ENCODE measurements at regions of chr15 and their contacts with region 1.

Region 1: GRCh38 chr15:63763476-63764123 is 70.1 kb downstream of the HERC1 start:
- DNase-seq: no peak
- H3K4me3 ChIP-seq: no peak overlapping the region
- H3K27ac ChIP-seq: no peak overlapping the region
- H3K4me1 ChIP-seq: peaks cover 6% of the 10 kb centered on the region
- H3K27me3 ChIP-seq: no peaks in the 10 kb centered on the region
- CTCF ChIP-seq: no peak
- EP300 ChIP-seq: no peak
- POLR2A ChIP-seq: no peak

Region 2: DNA sequence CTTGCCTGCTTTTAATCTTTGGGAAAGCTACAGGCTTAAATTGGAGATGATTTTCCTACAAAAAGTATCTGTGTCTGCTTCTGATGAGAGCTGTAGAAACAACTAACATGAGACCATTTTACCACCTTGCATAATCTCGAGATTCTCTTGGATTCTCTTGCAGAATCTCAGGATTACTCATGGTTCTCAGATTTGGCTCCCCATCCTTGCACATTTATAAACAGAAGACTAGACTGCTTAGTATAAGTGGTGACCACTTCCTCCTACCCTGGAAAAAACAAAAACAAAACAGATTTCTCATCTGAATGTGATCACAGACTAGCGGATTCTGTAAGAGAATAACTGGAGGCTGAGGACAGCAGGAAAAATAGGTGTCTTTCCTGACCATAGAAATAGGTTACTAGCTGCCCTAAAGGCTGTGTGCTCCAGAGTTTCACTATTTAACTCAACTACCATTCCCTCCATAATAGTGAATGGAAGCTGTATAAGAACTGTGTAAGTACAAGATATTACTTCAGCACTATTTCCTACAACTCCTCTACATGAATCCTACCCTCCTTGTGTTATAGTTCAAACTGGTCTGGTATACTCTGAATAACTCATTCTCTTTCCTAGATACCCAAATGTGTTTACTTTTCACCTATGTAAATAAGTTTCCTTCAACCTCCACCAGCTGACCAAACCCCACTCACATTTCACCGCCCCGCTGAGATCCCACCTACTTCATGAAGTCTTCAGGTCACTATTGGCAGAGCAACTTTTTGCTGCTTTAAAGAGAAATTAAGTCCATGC is 1476.3 kb before region 1 on chr15:
- intact Hi-C with region 1: no loop called
- DNase-seq: no peak
- H3K4me3 ChIP-seq: no peak overlapping the region
- H3K27ac ChIP-seq: no peak overlapping the region
- H3K4me1 ChIP-seq: no peaks in the 10 kb centered on the region
- H3K27me3 ChIP-seq: no peaks in the 10 kb centered on the region
- CTCF ChIP-seq: no peak
- EP300 ChIP-seq: no peak
- POLR2A ChIP-seq: no peak

Region 3: DNA sequence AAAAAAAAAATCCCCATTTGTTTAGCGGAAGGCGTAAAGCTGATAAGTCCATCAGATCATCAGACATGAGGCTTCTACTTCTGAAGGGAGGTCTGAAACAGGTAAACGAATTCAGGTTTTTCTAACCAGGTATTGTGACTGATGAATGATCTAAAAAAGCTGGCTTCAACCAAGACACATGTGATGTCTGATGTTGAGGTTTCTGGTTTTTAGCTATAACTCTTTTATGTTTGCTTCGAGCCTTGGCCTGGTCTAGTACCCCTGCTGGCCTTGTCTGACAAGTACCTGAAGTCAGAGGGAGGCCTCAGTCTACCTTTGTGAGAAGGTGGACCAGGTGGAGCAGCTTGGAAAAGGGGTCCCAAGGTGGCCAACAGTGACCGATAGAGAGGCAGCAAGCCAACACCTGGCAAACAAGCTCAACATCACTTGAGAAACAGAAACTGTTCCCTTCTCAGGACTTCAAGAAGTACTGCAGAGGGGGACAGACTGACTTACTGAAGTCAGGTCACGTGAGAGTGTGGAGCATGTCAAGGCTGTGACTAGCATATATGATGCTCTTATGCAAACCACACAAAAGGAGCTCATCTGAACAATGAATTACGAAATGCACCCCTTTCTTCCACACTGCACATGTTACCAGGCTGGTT is 349.0 kb before region 1 on chr15:
- intact Hi-C with region 1: no loop called
- DNase-seq: no peak
- H3K4me3 ChIP-seq: no peak overlapping the region
- H3K27ac ChIP-seq: no peak overlapping the region
- H3K4me1 ChIP-seq: no peaks in the 10 kb centered on the region
- H3K27me3 ChIP-seq: no peaks in the 10 kb centered on the region
- CTCF ChIP-seq: no peak
- EP300 ChIP-seq: no peak
- POLR2A ChIP-seq: no peak

Region 4: GRCh38 chr15:63891079-63891767 is 127.6 kb after region 1 on chr15:
- intact Hi-C with region 1: loop called in 1 of 4 experiments (anchors 10 kb)
- DNase-seq: peak; percentile 39 to 81 (median 69)
- H3K4me3 ChIP-seq: no peak overlapping the region
- H3K27ac ChIP-seq: no peak overlapping the region
- H3K4me1 ChIP-seq: no peaks in the 10 kb centered on the region
- H3K27me3 ChIP-seq: no peaks in the 10 kb centered on the region
- CTCF ChIP-seq: peak; percentile 23 to 46 (median 44)
- EP300 ChIP-seq: no peak
- POLR2A ChIP-seq: no peak

Region 5: DNA sequence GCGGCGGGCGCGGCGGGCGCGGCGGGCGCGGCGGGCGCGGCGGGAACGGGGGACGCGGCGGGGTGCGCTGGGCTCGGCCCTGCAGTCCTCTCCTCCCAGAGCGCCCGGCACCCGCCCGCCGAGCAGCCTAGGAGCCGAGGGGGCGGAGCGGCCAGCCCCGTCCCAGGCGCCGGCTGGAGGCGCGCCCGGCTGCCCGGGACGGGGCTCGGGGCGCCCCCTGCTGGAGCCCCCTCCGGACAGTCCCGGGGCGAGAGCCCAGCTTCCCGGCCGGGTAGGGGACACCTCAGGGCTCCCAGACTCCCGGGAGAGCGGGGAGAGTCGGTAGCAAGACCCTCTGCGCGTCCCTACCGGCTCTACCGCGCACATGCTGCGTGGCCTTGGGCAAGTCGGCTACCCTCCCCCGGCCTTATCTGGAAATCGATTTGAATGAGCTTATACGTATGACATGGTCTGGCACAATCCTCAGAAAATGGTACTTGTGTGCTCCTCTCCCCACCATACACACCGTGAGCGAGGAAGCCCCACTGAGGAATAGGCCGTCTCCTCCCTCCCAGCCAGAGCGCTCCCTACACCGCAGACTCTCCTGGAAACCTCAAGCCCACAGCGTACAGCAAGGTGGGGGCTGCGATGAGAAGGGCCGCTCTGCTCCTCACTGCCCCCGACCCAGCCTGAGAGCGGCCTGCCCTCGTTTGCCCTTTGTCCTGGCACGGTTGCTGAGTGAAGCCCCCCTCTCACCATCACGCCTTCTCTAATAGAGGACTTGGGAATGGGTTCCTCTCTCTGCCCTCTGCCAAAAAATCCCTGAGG is 282.9 kb after region 1 on chr15 and contains the start of gene DAPK2:
- intact Hi-C with region 1: loop called in 2 of 4 experiments (anchors 5 to 10 kb)
- DNase-seq: peak; percentile 45 to 77 (median 71)
- H3K4me3 ChIP-seq: peak within 1 kb of the TSS; percentile 56
- H3K27ac ChIP-seq: no peak within 1 kb of the TSS
- H3K4me1 ChIP-seq: peaks cover 13% of the 10 kb centered on the region
- H3K27me3 ChIP-seq: no peaks in the 10 kb centered on the region
- CTCF ChIP-seq: peak; percentile 33 to 68 (median 58)
- EP300 ChIP-seq: no peak
- POLR2A ChIP-seq: no peak
- total RNA-seq, gene DAPK2: 0.77 to 6.2 (median 1.7) TPM